A673 (cell line): ENCODE measurements at regions of chr3 and their contacts with region 1.

Region 1: DNA sequence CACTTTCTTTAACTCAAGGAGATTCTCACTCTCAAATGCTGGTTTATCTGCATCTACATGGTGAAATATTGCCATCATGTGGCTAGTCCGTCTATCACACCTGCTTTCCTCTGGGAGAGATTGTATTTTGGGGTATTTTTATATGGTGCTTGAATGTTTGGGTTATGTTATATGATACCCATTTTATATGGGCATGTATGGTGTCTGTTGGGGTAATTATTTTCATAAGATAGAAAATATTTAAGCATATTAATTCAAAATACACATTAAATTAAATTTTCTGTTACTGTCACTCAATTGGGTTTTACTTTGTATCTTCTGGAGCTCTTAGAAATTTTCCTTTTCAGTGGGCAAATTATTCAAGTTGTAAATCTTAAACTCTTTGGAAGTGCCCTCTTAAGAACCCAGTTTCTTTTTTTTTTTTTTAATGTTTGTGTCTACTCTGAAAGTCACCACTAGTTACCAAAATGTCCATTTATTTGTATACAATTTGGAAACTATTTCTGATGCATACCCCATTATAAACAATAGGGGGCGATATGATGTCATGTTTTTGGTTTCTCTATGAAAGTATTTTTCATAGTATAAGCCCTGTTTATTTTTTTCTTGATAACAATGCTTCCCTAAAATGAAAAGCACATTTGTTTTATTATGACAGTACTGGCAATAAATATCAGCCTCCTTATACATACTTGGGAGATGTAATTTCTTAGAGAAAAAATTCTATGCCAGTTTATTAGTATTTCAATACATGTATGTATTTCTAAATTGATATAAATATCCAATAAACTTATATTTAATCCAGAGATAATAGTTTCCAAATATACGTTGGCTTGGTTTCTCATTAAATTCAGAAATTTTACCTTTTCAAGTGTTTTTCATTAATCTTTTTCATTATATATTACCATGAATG is 36.1 kb upstream of the PLSCR5 start:
- DNase-seq: peak; percentile 78
- H3K4me3 ChIP-seq: no peak overlapping the region
- H3K27ac ChIP-seq: no peak overlapping the region
- H3K4me1 ChIP-seq: no peaks in the 10 kb centered on the region
- H3K27me3 ChIP-seq: no peaks in the 10 kb centered on the region
- CTCF ChIP-seq: peak; percentile 66

Region 2: DNA sequence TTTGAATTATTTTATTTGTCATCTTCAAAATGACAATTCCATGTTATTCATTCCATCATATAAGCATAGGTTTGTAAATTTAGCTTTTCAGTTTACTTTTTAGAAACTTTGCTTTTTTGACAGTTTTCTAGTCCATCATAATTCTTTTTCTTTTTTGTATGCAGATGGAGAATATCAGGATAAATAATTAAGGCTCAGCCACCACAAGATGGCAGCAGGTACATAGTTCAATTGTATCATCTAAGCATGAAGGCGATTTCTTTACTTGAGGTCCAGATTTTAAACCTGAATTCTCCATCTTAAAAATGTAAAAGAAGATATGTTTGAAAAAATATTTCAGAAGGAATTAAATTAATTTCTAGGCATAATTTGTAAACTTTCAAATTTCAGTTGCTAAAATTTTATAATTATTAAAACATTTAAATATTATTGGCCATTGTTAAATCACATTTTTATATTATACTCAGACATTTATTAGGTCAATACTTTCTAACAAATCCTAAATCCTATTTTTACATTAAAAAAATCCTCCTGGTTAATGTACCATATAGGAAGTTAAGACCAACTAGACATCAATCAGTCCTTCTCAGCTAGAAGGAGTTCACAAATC is 51.2 kb before region 1 on chr3:
- CTCF ChIA-PET with region 1: no interaction called
- POLR2A ChIA-PET with region 1: no interaction called
- intact Hi-C with region 1: loop called (anchors 2 kb)
- DNase-seq: peak; percentile 60
- H3K4me3 ChIP-seq: no peak overlapping the region
- H3K27ac ChIP-seq: no peak overlapping the region
- H3K4me1 ChIP-seq: no peaks in the 10 kb centered on the region
- H3K27me3 ChIP-seq: no peaks in the 10 kb centered on the region
- CTCF ChIP-seq: peak; percentile 71

Region 3: DNA sequence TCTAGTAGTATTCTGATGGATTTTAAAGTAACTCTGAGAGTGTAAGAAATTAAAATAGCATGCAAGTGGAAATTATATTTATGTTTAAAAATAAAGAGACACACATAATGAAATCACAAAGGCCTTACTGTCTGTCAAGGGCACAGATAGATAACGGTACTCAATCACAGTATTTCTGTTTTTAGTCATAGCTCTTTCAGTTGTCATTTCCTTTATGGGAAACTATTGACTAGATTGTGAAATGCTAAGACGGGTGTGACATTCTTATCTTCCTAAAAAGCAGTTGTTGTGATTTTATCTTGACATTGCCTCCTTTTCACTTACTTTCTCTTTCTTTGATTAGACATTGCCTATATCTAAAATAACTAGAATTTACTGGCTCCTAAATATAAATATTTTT is 64.0 kb after region 1 on chr3:
- CTCF ChIA-PET with region 1: no interaction called
- POLR2A ChIA-PET with region 1: no interaction called
- intact Hi-C with region 1: no loop called
- DNase-seq: no peak
- H3K4me3 ChIP-seq: no peak overlapping the region
- H3K27ac ChIP-seq: no peak overlapping the region
- H3K4me1 ChIP-seq: no peaks in the 10 kb centered on the region
- H3K27me3 ChIP-seq: no peaks in the 10 kb centered on the region
- CTCF ChIP-seq: no peak

Region 4: DNA sequence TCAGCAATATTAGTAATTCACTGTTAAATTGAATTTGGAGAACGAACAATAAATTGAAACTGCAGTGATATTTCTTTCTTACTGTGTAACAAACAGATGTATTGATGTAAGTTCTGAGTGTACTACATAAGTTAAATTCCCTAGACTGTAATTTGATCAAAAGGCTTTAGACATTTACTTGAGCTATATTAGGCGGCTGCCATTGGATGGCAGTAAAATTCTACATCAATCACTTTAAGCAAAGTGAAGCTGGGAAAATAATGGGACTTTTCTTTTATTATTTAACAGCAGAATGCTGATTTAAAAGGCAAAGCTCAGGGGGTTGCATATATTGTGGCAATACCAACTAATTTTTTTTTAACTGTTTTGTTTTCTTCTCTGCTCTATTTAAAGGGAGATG is 176.5 kb after region 1 on chr3:
- CTCF ChIA-PET with region 1: interaction called, 3 read pairs
- POLR2A ChIA-PET with region 1: no interaction called
- intact Hi-C with region 1: loop called (anchors 10 kb)
- DNase-seq: peak; percentile 86
- H3K4me3 ChIP-seq: no peak overlapping the region
- H3K27ac ChIP-seq: no peak overlapping the region
- H3K4me1 ChIP-seq: peaks cover 22% of the 10 kb centered on the region
- H3K27me3 ChIP-seq: no peaks in the 10 kb centered on the region
- CTCF ChIP-seq: peak; percentile 68

Region 5: GRCh38 chr3:147191795-147192385 is 550.7 kb after region 1 on chr3:
- CTCF ChIA-PET with region 1: no interaction called
- POLR2A ChIA-PET with region 1: no interaction called
- intact Hi-C with region 1: loop called (anchors 5 kb)
- DNase-seq: peak; percentile 82
- H3K4me3 ChIP-seq: no peak overlapping the region
- H3K27ac ChIP-seq: no peak overlapping the region
- H3K4me1 ChIP-seq: peaks cover 15% of the 10 kb centered on the region
- H3K27me3 ChIP-seq: no peaks in the 10 kb centered on the region
- CTCF ChIP-seq: peak; percentile 89